ENCODE measurements at regions of chr5 and their contacts with region 1.

Region 1: DNA sequence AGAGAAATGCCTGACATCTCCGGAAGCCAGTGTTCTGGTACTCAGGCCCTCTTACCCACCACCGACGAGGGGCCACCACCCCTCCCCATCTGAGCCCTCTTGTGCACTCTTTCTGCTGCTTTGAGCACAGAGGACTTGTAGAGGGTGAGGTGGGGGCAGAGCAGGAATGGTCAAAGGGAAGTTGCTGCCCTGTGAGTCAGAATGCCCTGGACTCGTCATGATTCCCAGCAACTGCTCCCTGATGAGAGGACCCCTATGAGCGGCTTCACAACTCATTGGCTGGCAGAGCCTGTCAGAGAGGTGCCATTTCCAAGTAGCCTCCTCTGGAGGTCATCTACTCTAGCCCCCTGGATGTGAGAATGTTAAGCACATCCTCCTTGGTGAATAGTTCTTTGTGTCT is 845 bp downstream of the ECSCR start:
- DNase-seq: no peak
- ATAC-seq: peak; percentile 59; the same call in 1 of the 2 replicates
- H3K4me3 ChIP-seq: no peak overlapping the region
- H3K27ac ChIP-seq: no peak overlapping the region
- H3K4me1 ChIP-seq: no peaks in the 10 kb centered on the region
- H3K27me3 ChIP-seq: no peaks in the 10 kb centered on the region
- CTCF ChIP-seq: no peak

Region 2: DNA sequence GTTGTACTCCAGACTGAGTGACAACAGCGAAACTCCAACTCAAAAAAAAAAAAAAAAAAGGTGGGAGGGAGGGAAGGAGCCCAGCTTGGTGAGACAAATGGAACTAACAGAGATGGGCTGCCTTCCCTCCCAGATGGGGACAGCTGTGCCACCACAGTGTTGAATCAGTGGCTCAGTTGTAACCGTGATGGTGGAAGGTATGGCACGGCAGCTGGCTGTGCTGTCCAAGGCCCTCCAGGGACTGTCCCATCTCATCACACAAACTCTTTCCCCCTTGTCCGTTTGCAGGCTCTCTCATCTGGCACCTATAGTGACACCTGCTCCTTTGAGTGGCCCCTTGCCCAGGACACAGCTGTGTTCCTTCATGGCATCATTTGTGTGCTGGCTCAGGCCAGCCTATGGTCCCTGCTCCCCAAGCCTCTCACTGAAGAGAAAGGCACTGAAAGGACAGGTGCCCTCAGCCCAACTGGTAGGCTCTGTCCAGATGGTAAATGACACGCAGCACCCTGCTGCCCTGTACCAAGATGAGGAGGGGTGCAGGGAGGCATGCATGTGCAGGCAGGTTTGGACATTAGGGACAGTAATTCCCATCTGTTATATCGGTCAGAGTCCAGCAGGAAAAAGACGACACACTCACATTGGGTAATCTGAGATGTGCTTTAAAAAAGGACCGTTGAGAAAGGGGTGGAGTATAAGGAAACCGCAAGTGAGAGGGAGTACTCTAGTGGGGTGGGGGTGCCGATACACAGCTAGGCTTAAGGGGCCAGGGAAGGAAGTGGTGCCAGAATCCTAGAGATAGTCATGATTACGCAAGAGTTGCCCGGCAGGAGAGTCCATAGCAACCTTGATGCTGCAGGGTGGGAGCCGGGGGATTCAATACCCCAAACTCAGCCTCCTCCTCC is 13.4 kb after region 1 on chr5:
- CTCF ChIA-PET with region 1: no interaction called
- POLR2A ChIA-PET with region 1: interaction called, 13 read pairs
- in situ Hi-C with region 1: no loop called
- intact Hi-C with region 1: no loop called
- DNase-seq: no peak
- ATAC-seq: no peak
- H3K4me3 ChIP-seq: no peak overlapping the region
- H3K27ac ChIP-seq: no peak overlapping the region
- H3K4me1 ChIP-seq: no peaks in the 10 kb centered on the region
- H3K27me3 ChIP-seq: no peaks in the 10 kb centered on the region
- CTCF ChIP-seq: no peak